Head of caudate nucleus (tissue), 42 donors: ENCODE measurements at regions of chr18 and their contacts with region 1.

Region 1: GRCh38 chr18:34976899-34977837 is 64.0 kb upstream of the MAPRE2 start:
- DNase-seq: peak; percentile 79 to 96 (median 93)

Region 2: DNA sequence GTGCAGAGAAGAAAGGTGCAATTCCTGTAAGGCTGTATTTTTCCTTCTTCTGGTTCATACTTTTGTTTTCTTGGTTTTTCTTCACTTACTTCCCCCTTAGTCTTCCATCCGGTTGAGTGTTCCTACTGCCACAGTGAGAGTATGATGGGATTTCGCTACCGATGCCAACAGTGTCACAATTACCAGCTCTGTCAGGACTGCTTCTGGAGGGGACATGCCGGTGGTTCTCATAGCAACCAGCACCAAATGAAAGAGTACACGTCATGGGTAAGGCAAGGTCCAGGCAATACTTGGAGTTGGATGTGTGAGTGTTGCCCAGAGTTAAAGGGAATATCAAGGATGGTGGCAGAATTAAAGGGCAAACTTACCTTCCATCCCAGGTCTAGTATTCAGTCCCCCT is 159.1 kb before region 1 on chr18:
- intact Hi-C with region 1: no loop called
- DNase-seq: peak in 39 of 42 donors; percentile 16 to 82 (median 49)

Region 3: GRCh38 chr18:34828104-34828503 is 149.1 kb before region 1 on chr18:
- intact Hi-C with region 1: no loop called
- DNase-seq: no peak

Region 4: GRCh38 chr18:34880882-34881834 is 96.0 kb before region 1 on chr18:
- intact Hi-C with region 1: loop called (anchors 10 kb)
- DNase-seq: no peak

Region 5: DNA sequence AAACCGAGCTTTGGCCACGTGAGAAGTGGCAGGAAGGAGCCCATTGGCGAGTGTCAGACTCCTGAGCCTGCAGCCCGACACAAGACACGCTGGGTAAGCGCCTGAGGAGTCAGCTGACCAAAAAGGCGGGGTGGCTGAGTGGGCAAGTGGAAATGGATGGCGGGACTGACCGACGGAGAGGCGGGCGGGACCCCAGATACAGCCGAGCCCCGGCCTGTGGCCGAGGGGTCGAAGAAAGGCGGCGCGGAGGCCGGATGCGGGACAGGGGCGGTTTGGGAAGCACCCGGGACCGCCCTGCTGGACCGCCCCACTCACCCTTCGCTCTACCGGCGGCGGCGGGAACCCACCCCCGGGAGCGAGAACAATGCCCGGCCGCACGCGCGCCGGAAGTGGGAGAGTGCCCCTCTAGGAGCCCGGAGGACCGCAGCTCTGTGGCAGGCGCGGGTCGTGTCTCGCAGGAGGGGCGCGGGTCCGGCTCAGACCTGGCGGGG is 290.0 kb after region 1 on chr18:
- intact Hi-C with region 1: no loop called
- DNase-seq: peak; percentile 75 to 92 (median 84)